PC-3 (cell line): ENCODE measurements at regions of chrX and their contacts with region 1.

Region 1: GRCh38 chrX:12974796-12975669 is at the start of gene TMSB4X:
- DNase-seq: peak; percentile 81
- ATAC-seq: peak; percentile 74
- H3K4me3 ChIP-seq: peak within 1 kb of the TSS; percentile 92
- H3K27ac ChIP-seq: peak within 1 kb of the TSS; percentile 85
- H3K4me1 ChIP-seq: peaks cover 24% of the 10 kb centered on the region
- H3K27me3 ChIP-seq: no peaks in the 10 kb centered on the region
- CTCF ChIP-seq: no peak
- total RNA-seq, gene TMSB4X: 1,640 and 2,159 TPM in 2 replicates

Region 2: DNA sequence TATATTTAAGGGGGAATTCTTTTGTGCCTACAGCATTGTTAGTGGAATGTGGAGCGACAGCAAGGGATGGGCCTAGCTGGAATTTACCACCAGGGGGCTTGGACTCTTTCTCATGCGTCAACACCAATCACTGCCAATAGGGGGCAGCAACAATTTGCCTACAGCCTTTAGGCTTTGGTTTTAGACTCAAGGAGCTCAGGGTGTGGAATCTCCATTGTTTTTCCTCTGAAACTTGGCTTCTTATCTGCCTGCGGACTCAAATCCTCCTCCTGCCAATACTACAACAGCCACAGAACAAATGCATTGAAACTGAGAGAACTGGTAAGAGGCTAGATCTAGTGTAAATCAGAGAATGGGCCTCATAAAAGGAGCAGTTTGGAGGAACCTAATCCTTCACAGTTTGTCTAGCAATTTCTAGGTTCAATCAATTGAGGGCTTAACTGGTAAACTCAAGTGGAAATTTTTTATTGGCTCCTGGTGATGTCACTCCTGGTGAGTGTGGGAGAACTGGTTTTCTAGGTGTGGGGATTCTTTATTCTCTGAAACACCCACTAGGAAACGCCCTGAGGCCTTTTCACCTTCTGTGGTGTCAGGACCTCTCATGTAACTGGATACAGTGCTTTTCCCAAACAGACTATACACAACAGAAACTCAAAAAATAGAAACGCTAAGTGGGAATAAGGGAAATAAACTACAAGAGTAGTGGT is 28.0 kb before region 1 on chrX:
- CTCF ChIA-PET with region 1: interaction called, 4 read pairs
- POLR2A ChIA-PET with region 1: no interaction called
- intact Hi-C with region 1: loop called (anchors 2 kb)
- DNase-seq: peak; percentile 93
- ATAC-seq: peak; percentile 86
- H3K4me3 ChIP-seq: peak overlapping the region; percentile 41
- H3K27ac ChIP-seq: peak overlapping the region; percentile 93
- H3K4me1 ChIP-seq: peaks cover 25% of the 10 kb centered on the region
- H3K27me3 ChIP-seq: no peaks in the 10 kb centered on the region
- CTCF ChIP-seq: peak; percentile 99

Region 3: DNA sequence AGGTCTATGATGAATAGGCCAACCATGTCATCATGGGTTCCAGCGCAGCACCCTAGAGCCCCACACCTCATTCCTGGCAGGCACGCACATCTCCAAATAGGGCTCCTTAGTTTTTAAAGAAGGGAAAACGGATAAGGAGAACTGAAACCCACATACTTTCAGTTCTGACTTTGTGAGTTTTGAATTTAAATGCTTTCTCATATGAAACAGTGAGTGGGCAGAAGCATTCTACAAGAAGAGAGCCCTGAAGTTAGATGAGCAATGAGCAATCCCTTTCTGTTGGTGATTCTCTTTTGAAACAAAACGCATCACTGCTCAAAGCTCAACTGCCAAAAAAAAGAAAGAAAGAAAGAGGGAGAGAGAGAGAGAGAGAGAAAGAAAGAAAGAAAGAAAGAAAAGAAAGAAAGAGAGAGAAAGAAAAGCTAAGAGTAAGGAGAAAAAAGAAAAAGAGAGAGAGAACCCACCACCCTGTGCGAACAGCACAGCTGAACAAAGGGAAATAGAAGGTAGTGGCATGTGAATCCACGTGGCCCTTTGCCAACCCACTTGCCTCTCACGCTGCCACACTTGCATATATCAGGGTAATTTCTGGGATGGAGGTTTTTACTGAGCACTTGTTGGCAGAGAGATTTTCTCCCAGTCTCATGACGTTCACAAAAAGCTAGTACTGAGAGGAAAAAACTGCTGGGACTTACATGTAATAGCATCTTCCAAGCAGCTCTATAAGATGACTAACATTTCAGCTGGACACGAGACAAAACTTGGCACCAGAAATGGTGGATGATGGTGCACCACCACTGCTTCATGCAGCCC is 30.8 kb after region 1 on chrX:
- CTCF ChIA-PET with region 1: no interaction called
- POLR2A ChIA-PET with region 1: interaction called, 3 read pairs
- intact Hi-C with region 1: loop called (anchors 1 kb)
- DNase-seq: no peak
- ATAC-seq: no peak
- H3K4me3 ChIP-seq: no peak overlapping the region
- H3K27ac ChIP-seq: peak overlapping the region; percentile 97
- H3K4me1 ChIP-seq: peaks cover 78% of the 10 kb centered on the region
- H3K27me3 ChIP-seq: no peaks in the 10 kb centered on the region
- CTCF ChIP-seq: no peak

Region 4: GRCh38 chrX:13101441-13102139 is 126.6 kb after region 1 on chrX:
- CTCF ChIA-PET with region 1: no interaction called
- POLR2A ChIA-PET with region 1: interaction called, 8 read pairs
- intact Hi-C with region 1: loop called (anchors 5 kb)
- DNase-seq: peak; percentile 91
- ATAC-seq: peak; percentile 98
- H3K4me3 ChIP-seq: 0 out of 2 replicates have a peak overlapping the region, but pooled peaks have one; percentile 4
- H3K27ac ChIP-seq: peak overlapping the region; percentile 94
- H3K4me1 ChIP-seq: peaks cover 44% of the 10 kb centered on the region
- H3K27me3 ChIP-seq: no peaks in the 10 kb centered on the region
- CTCF ChIP-seq: no peak

Region 5: GRCh38 chrX:13110433-13111324 is 135.6 kb after region 1 on chrX:
- CTCF ChIA-PET with region 1: interaction called, 10 read pairs
- POLR2A ChIA-PET with region 1: no interaction called
- intact Hi-C with region 1: no loop called
- DNase-seq: peak; percentile 91
- ATAC-seq: peak; percentile 84
- H3K4me3 ChIP-seq: no peak overlapping the region
- H3K27ac ChIP-seq: peak overlapping the region; percentile 96
- H3K4me1 ChIP-seq: peaks cover 35% of the 10 kb centered on the region
- H3K27me3 ChIP-seq: no peaks in the 10 kb centered on the region
- CTCF ChIP-seq: no peak

Region 6: DNA sequence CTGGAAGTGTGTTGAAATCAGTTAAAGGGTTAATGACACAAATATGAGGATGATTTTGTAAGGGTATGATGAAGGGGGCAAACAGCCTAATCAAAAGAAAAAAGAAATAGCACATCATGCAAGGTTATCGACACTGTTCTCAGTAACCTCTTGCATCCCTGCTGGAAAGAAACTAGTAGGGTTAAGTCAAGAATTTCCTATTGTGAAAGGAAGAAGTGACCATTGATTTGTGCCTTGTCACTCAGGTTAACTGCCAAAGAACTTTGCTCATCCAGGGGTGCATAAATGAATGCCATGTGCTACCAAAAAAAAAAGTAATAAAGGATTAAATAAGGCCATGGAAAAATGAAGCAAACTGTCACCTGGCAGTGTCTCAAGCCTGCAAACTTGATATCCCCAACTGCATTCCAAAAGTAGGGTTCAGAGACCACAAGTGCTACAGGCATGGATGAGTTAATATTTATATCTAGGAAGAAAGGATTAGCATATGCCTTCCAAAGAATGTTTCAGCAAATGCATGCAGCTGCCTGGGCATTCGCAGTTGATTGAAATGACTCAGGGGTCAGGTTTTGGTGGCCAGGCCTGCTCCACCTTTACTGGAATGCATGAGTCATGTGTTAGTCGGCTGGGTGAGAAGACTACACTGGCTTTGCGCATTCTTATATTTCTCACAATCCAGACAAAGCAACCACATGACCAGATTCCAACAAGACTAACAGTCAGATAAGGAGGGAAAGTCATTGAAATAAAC is 423.2 kb after region 1 on chrX:
- CTCF ChIA-PET with region 1: no interaction called
- POLR2A ChIA-PET with region 1: no interaction called
- intact Hi-C with region 1: loop called (anchors 5 kb)
- DNase-seq: peak; percentile 97
- ATAC-seq: peak; percentile 93
- H3K4me3 ChIP-seq: no peak overlapping the region
- H3K27ac ChIP-seq: peak overlapping the region; percentile 95
- H3K4me1 ChIP-seq: peaks cover 30% of the 10 kb centered on the region
- H3K27me3 ChIP-seq: no peaks in the 10 kb centered on the region
- CTCF ChIP-seq: no peak

Region 7: GRCh38 chrX:13653022-13653693 is 678.1 kb after region 1 on chrX and contains the start of gene TCEANC:
- CTCF ChIA-PET with region 1: no interaction called
- POLR2A ChIA-PET with region 1: no interaction called
- intact Hi-C with region 1: loop called (anchors 10 kb)
- DNase-seq: peak; percentile 97
- ATAC-seq: peak; percentile 93
- H3K4me3 ChIP-seq: peak within 1 kb of the TSS; percentile 82
- H3K27ac ChIP-seq: peak within 1 kb of the TSS; percentile 98
- H3K4me1 ChIP-seq: peaks cover 28% of the 10 kb centered on the region
- H3K27me3 ChIP-seq: no peaks in the 10 kb centered on the region
- CTCF ChIP-seq: no peak
- total RNA-seq, gene TCEANC: 0.62 and 0.69 TPM in 2 replicates